ENCODE measurements at regions of chr6 and their contacts with region 1.

Region 1: GRCh38 chr6:116680975-116681808 is at the start of gene KPNA5:
- DNase-seq: peak; percentile 89
- ATAC-seq: peak; percentile 92
- H3K4me3 Mint-ChIP-seq: peak within 1 kb of the TSS; percentile 99
- H3K27ac Mint-ChIP-seq: peak within 1 kb of the TSS; percentile 99
- H3K4me1 Mint-ChIP-seq: peaks cover 40% of the 10 kb centered on the region
- H3K27me3 Mint-ChIP-seq: no peaks in the 10 kb centered on the region
- CTCF ChIP-seq: no peak
- total RNA-seq, gene KPNA5: 25.0 and 29.9 TPM in 2 replicates

Region 2: GRCh38 chr6:116016846-116017545 is 664.2 kb before region 1 on chr6:
- CTCF ChIA-PET with region 1: no interaction called
- POLR2A ChIA-PET with region 1: no interaction called
- intact Hi-C with region 1: loop called (anchors 5 kb)
- DNase-seq: no peak
- ATAC-seq: no peak
- H3K4me3 Mint-ChIP-seq: peak overlapping the region; percentile 52
- H3K27ac Mint-ChIP-seq: peak overlapping the region; percentile 71
- H3K4me1 Mint-ChIP-seq: peaks cover 59% of the 10 kb centered on the region
- H3K27me3 Mint-ChIP-seq: no peaks in the 10 kb centered on the region
- CTCF ChIP-seq: no peak

Region 3: DNA sequence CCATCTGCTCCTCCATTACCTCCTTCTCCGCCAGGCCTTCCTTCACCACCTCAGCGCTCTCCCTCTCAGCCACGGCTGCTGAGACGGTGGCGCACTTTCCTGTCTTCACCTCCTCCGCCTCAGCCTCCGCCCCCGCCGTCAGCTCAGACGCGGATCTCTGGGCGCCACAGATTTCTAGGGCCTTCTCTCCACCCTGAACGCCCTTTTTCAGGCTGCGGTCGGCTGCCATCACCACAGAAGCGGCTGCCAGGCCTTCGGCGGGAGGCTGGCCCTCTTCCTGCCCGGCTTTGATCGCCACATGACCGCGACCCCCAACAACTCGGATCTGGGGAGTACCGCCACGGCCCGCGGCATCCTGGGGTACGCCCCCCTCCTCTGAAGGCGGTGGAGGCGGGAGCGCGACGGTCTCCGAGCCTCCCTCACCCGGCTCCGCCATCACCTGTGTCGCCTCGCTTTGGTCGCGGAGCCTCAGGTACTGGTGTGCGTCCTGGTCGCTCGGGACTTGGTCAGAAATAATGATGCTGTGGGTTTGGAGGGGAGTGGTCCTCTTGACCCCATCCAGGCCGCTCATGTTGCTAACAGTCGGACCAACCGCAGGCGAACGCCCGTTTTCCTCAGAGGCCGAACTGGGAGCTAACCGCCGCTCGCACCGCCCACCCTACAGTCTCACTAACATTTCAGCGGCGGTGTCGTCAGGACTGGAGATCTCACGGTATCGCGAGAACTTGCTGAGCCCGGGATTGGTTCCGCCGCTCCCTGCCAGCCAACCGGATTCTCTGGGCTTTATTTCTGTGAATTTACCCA is 401.7 kb before region 1 on chr6 and contains the start of gene TSPYL1:
- CTCF ChIA-PET with region 1: no interaction called
- POLR2A ChIA-PET with region 1: no interaction called
- intact Hi-C with region 1: loop called (anchors 1 kb)
- DNase-seq: peak; percentile 85
- ATAC-seq: peak; percentile 91
- H3K4me3 Mint-ChIP-seq: peak within 1 kb of the TSS; percentile 95
- H3K27ac Mint-ChIP-seq: peak within 1 kb of the TSS; percentile 100
- H3K4me1 Mint-ChIP-seq: peaks cover 71% of the 10 kb centered on the region
- H3K27me3 Mint-ChIP-seq: no peaks in the 10 kb centered on the region
- CTCF ChIP-seq: no peak
- total RNA-seq, gene TSPYL1: 67.4 and 68.4 TPM in 2 replicates

Region 4: DNA sequence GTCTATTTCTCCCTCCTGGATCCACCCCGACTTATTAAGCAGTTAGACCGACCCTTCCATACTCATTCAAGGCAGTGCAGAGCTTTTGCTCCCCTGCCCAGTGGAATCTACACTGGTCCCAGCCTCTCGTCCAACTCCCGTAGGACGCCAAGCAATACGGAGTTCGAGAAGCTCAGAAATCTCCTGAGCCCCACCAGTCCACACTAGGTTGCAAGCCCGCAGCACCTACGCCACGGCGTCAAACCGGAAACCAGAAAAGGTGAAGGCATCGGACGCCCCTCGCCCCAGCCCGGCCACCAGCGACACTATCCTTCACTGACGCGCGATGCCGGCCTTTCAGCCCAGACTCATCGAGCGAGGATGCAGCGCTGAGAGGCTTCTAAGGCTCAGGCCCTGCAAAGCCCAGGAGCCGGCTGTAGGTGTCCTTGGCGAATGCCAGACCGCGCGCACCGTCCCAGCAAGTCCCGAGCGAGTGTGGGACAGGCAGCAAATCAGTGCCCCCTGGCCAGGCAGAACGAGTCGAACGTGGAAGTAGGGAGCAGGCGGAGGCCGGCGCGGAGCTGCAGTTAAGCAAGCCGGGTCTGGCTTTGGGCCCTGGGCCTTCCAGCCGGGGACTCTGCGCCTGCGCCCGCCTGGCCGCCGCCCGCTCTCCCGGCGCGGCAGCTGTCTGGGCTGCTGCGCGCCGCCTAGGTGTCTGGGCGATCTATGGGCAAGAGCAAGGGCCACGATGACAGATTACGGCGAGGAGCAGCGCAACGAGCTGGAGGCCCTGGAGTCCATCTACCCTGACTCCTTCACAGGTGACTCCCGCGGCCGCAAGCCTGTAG is 110.1 kb before region 1 on chr6 and contains the start of gene RWDD1:
- CTCF ChIA-PET with region 1: no interaction called
- POLR2A ChIA-PET with region 1: interaction called, 13 read pairs
- intact Hi-C with region 1: loop called (anchors 1 kb)
- DNase-seq: peak; percentile 94
- ATAC-seq: peak; percentile 94
- H3K4me3 Mint-ChIP-seq: peak within 1 kb of the TSS; percentile 95
- H3K27ac Mint-ChIP-seq: peak within 1 kb of the TSS; percentile 96
- H3K4me1 Mint-ChIP-seq: peaks cover 51% of the 10 kb centered on the region
- H3K27me3 Mint-ChIP-seq: no peaks in the 10 kb centered on the region
- CTCF ChIP-seq: no peak
- total RNA-seq, gene RWDD1: 30.9 and 33.8 TPM in 2 replicates

Region 5: DNA sequence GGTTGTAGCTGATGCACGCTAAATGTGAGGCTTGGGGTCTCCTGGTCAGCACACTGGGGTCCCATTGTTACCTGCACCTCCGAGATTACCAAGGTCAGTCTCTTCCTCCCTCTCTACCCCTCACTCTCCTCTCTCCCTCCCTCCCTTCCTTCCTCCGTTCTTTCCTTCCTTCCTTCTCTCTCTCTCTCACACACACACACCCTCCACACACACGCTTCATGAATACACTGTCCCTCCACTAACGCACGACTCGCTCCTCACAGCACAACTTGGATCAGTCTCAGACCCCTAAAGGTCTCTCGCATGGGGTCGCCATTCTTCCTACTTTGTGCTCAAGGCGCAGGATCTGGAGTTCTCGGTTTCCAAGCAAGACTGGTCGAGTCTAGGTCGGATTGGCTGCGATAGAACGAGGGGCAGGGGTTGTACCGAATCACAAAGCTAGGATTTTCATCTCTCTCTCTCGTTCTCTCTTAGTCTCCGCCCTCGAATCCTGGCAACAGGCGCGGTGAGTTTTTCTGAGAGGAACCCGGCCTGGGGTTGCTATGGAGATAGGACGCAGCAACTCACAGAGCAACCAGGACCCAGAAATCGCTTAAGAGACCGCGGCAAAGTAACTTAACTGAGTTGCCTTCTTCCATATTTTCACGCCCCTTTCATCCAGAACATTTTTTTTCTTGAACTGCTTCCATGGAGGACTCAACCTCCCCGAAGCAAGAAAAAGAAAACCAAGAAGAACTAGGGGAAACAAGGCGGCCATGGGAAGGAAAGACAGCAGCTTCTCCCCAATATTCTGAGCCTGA is 65.1 kb before region 1 on chr6 and contains the start of gene RSPH4A:
- CTCF ChIA-PET with region 1: no interaction called
- POLR2A ChIA-PET with region 1: no interaction called
- intact Hi-C with region 1: no loop called
- DNase-seq: peak; percentile 34
- ATAC-seq: peak; percentile 95
- H3K4me3 Mint-ChIP-seq: peak within 1 kb of the TSS; percentile 84
- H3K27ac Mint-ChIP-seq: peak within 1 kb of the TSS; percentile 8
- H3K4me1 Mint-ChIP-seq: peaks cover 18% of the 10 kb centered on the region
- H3K27me3 Mint-ChIP-seq: peaks cover under 1% of the 10 kb centered on the region
- CTCF ChIP-seq: no peak
- total RNA-seq, gene RSPH4A: 0.39 and 0.40 TPM in 2 replicates

Region 6: DNA sequence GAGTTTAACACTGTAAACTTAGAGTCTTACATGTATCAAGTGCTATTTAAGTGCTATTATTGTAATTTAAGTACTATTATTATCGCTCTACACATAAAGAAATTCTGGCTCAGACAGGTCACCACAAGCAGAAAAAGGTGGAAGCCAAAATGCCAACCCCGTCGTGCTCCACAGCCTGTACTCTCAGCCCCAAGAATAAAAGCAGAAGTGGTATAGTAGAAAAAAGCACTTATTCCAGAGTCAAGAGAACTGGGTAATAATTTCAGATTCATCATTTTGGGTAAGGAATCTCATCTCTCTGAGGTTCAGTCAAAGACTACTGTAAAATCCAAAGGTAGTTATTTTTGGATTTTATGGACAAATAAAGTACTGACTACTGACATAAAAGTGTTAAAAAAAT is 13.6 kb before region 1 on chr6:
- CTCF ChIA-PET with region 1: interaction called, 3 read pairs
- POLR2A ChIA-PET with region 1: interaction called, 28 read pairs
- intact Hi-C with region 1: loop called (anchors 1 kb)
- DNase-seq: no peak
- ATAC-seq: peak; percentile 62
- H3K4me3 Mint-ChIP-seq: peak overlapping the region; percentile 100
- H3K27ac Mint-ChIP-seq: peak overlapping the region; percentile 99
- H3K4me1 Mint-ChIP-seq: peaks cover 41% of the 10 kb centered on the region
- H3K27me3 Mint-ChIP-seq: peaks cover 8% of the 10 kb centered on the region
- CTCF ChIP-seq: no peak

Region 7: GRCh38 chr6:116695401-116695800 is 14.2 kb after region 1 on chr6:
- CTCF ChIA-PET with region 1: no interaction called
- POLR2A ChIA-PET with region 1: no interaction called
- intact Hi-C with region 1: loop called (anchors 1 kb)
- DNase-seq: no peak
- ATAC-seq: peak; percentile 85
- H3K4me3 Mint-ChIP-seq: no peak overlapping the region
- H3K27ac Mint-ChIP-seq: no peak overlapping the region
- H3K4me1 Mint-ChIP-seq: peaks cover 29% of the 10 kb centered on the region
- H3K27me3 Mint-ChIP-seq: no peaks in the 10 kb centered on the region
- CTCF ChIP-seq: no peak

Region 8: GRCh38 chr6:117674991-117675657 is 993.9 kb after region 1 on chr6 and contains the start of gene NUS1:
- CTCF ChIA-PET with region 1: no interaction called
- POLR2A ChIA-PET with region 1: no interaction called
- intact Hi-C with region 1: loop called (anchors 1 kb)
- DNase-seq: peak; percentile 97
- ATAC-seq: peak; percentile 98
- H3K4me3 Mint-ChIP-seq: peak within 1 kb of the TSS; percentile 95
- H3K27ac Mint-ChIP-seq: peak within 1 kb of the TSS; percentile 89
- H3K4me1 Mint-ChIP-seq: peaks cover 42% of the 10 kb centered on the region
- H3K27me3 Mint-ChIP-seq: no peaks in the 10 kb centered on the region
- CTCF ChIP-seq: no peak
- total RNA-seq, gene NUS1: 29.1 and 30.6 TPM in 2 replicates

Measured in activated B cell treated with CpG ODN at 0.5 μM for 24 hours (primary cell).